Heart left ventricle (tissue), 16 donors: ENCODE measurements at regions of chr11 and their contacts with region 1.

Region 1: DNA sequence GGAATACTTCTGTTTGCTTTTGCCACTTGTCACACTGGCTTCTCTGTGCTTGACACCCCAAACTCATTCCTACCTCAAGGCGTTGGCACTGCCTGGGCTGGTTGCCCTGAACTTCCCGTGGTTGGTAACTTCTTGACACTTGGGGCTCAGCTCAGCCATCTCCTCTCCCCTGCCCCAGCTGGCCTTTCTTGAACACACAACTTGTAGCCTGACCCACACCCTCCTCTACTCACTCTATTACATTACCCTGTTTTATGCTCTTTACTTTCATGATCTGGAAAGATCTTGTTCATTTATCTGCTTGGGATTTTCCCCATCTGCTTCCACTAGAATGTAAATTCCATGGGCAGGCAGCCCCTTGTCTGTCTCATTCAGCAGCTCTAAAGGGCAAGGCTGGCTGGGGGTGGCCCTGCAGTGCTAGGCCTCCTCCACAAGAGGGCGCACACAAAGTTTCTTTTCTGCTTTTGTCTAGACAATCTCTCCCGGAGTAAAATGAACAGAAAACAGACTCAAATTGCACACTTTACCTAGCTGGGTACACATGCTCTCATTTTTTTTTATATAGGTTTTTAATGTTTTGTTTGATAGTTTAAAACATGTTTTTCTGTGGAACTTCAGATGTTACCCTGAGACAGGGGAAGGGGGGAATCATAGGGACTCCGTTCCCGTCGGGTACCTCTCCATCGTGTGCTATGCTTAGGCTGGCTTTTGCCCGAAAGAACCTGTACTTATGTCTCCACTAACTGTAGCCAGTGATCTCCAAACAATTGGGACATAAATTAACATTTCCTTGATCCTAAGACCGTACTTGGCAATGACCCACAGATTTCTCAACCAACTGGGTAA is 16.4 kb upstream of the MRGPRX2 start:
- DNase-seq: peak in 2 of 5 donors; percentile 34 to 38
- ATAC-seq: peak; percentile 54 to 73 (median 66)
- H3K4me3 ChIP-seq: peak overlapping the region in 1 of 12 donors; percentile 10
- H3K27ac ChIP-seq: no peak overlapping the region
- H3K4me1 ChIP-seq: peaks cover 0 to 3% (median 0%) of the 10 kb centered on the region in 12 donors
- H3K27me3 ChIP-seq: no peaks in the 10 kb centered on the region
- CTCF ChIP-seq: peak; percentile 88 to 99 (median 94)
- POLR2A ChIP-seq: no peak

Region 2: DNA sequence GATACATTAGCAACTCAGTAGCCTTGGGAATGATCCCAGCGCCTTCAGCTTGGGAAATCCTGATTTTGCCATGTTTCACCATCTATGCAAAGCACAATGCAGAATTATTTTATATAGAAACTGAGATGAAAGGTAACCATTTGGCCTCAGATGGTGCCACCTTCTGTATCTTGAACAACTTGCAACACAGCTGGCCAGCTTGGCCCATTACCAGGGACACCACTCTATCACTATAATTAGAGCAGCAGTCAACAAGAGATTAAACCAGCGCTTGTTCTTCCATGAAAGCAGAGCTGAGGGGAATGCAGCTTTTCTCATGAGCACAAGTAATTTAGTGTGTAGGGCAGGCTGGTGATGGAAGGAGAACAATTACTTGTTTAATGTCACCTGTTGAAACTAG is 33.3 kb after region 1 on chr11:
- intact Hi-C with region 1: loop called in 8 of 10 experiments (anchors 2 to 5 kb)
- DNase-seq: peak in 4 of 5 donors; percentile 53 to 76 (median 68)
- ATAC-seq: peak; percentile 83 to 96 (median 90)
- H3K4me3 ChIP-seq: no peak overlapping the region
- H3K27ac ChIP-seq: peak overlapping the region in 5 of 12 donors; percentile 10 to 64 (median 37)
- H3K4me1 ChIP-seq: peaks cover 0 to 13% (median 0%) of the 10 kb centered on the region in 12 donors
- H3K27me3 ChIP-seq: no peaks in the 10 kb centered on the region
- CTCF ChIP-seq: peak in 4 of 12 donors; percentile 8 to 42 (median 30)
- POLR2A ChIP-seq: no peak

Region 3: GRCh38 chr11:19259487-19260345 is 182.7 kb after region 1 on chr11:
- intact Hi-C with region 1: loop called in 3 of 10 experiments (anchors 5 to 10 kb)
- DNase-seq: peak; percentile 27 to 76 (median 57)
- ATAC-seq: peak in 3 of 4 donors; percentile 54 to 72 (median 71)
- H3K4me3 ChIP-seq: peak overlapping the region in 5 of 12 donors; percentile 18 to 49 (median 31)
- H3K27ac ChIP-seq: no peak overlapping the region
- H3K4me1 ChIP-seq: peaks cover 0 to 4% (median 0%) of the 10 kb centered on the region in 12 donors
- H3K27me3 ChIP-seq: no peaks in the 10 kb centered on the region
- CTCF ChIP-seq: peak; percentile 86 to 98 (median 94)
- POLR2A ChIP-seq: no peak